Activated T-helper 1 cell treated with anti-CD3 and anti-CD28 coated beads, Interleukin-12 subunit alpha, Interleukin-12 subunit beta, Interleukin-2, Interleukin-4 antibody, amounts not matched to agents 30 ng/mL and 10 ng/mL and 1 ng/mL, durations not matched to agents 14 hours and 24 hours and 36 hours (primary cell): ENCODE measurements at regions of chrX and their contacts with region 1.

Region 1: DNA sequence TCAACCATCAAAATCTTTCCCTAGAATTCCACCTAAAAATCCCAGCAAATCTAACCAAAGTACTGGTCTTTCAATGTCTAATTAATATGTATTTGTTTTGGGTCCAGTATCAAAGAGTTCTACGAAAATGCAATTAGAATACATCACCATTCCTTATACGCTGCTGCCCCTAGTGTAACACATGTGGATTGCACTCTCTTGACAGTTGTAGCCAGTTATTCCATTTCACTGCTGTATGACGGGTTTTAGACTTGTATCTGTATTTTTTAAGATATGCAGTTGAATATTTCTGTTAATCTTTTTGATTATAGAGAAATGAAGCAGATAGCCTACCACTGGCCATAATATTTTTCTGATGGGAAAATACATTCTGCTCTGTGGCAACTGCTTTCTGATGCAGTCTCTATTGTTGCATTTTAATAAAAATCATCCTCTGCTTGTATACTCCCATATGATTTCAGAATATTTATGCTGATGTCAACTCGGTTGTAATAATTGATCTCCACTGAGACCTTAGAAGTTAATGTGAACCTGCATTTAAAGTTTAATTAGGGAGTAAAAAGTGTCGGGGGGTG is 17.1 kb upstream of the PAGE2B start:
- DNase-seq: peak; percentile 0
- H3K4me3 Mint-ChIP-seq: peak overlapping the region; percentile 58
- H3K27ac Mint-ChIP-seq: no peak overlapping the region
- H3K4me1 Mint-ChIP-seq: peaks cover 12% of the 10 kb centered on the region
- H3K27me3 Mint-ChIP-seq: peaks cover under 1% of the 10 kb centered on the region

Region 2: DNA sequence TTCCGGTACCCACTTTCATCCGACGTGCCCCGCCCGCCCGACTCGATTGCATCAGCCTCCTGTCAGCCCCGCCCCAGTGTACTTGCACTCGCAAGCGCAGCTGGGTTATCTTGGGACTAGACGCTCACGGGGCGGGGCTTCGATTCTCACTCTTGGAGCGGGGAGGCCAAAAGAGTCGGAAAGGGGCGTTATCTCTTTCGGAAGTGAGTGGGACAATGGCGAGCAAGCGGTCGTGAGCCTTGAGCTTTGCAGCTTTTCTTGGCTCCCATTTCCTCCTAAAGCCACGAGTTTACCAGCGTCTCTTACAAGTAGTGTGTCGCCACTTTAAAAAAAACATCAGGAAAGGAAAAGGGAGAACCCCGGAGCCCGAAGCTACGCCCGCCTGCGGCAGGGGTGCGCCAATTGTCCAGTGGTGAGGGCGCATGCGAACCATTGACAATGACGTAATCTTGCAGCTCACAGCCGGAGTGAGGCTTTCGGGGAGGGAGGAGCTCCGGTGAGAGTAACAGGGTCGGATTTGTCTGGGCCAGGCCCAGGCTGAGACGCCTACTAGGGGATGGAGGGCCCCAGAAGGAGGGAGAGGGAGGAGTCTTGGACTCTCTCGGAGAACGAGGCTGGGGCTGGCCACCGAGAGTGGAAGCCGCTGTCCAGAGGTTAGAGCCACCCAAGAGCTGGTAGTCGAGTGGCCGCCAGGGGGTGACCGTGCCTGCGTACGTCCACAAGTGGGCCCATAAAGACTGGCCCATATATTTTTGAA is 418.2 kb before region 1 on chrX:
- intact Hi-C with region 1: loop called (anchors 2 kb)
- DNase-seq: peak; percentile 87
- H3K4me3 Mint-ChIP-seq: peak overlapping the region; percentile 93
- H3K27ac Mint-ChIP-seq: peak overlapping the region; percentile 99
- H3K4me1 Mint-ChIP-seq: peaks cover 10% of the 10 kb centered on the region
- H3K27me3 Mint-ChIP-seq: no peaks in the 10 kb centered on the region

Region 3: DNA sequence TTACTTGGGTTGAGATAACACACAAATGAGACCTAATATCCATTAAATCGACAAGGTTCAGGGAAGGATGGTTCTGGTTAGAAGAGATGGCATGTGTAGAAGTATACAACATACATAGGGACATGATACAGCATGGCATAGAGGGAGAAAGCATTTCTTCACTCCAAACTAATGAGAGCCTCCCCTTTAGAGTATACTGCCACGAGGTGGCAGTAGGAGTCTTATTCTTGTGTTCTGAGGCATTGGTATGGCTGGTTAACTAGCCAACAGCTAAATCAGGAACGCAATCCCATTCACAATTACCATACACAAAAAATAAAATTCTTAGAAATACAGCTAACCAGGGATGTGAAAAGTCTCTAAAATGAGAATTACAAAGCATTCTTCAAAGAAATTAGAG is 166.2 kb before region 1 on chrX:
- intact Hi-C with region 1: loop called (anchors 1 kb)
- DNase-seq: peak; percentile 2
- H3K4me3 Mint-ChIP-seq: no peak overlapping the region
- H3K27ac Mint-ChIP-seq: no peak overlapping the region
- H3K4me1 Mint-ChIP-seq: no peaks in the 10 kb centered on the region
- H3K27me3 Mint-ChIP-seq: peaks cover 5% of the 10 kb centered on the region